Breast epithelium (tissue), 4 donors: ENCODE measurements at regions of chr20 and their contacts with region 1.

Region 1: DNA sequence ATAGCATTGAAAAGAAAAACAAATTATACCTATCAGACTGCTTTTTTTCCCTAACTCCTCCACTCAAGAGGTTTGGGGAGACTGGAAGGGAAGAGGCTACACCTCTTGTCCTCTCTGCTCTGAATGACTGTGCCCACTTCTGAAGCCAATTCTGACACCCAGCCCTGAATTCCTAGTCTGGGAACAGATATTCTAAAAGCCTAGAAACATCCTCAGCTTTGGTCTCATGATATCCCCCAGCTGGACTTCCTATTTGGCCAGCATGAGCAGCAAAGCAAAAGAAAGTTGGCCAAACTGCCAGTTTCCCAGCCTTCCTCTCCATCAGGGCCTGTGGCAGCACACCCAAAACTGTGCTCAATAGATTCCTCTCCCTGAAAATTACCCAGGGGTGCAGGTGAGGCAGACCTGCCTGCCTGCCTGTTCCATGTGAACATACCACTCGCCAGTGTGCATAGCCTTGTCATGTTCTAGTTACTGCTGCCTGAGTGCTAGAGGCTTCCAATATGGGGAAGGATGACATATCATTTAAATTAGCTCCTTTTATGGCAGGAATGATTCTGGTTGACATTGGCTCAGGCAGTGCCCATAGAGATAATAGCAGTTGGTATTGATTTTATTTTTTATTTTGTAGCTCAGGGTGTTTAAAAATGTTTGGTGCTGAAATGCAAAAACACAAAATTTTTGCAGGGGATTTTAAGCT is 152.1 kb upstream of the RIN2 start:
- DNase-seq: no peak
- H3K4me3 ChIP-seq: no peak overlapping the region
- H3K27ac ChIP-seq: no peak overlapping the region
- H3K4me1 ChIP-seq: no peaks in the 10 kb centered on the region
- H3K27me3 ChIP-seq: no peaks in the 10 kb centered on the region
- CTCF ChIP-seq: no peak
- POLR2A ChIP-seq: no peak

Region 2: GRCh38 chr20:18237682-18238081 is 1368.3 kb before region 1 on chr20:
- intact Hi-C with region 1: no loop called
- DNase-seq: no peak
- H3K4me3 ChIP-seq: no peak overlapping the region
- H3K27ac ChIP-seq: no peak overlapping the region
- H3K4me1 ChIP-seq: no peaks in the 10 kb centered on the region
- H3K27me3 ChIP-seq: no peaks in the 10 kb centered on the region
- CTCF ChIP-seq: no peak
- POLR2A ChIP-seq: no peak

Region 3: GRCh38 chr20:19571996-19572395 is 33.9 kb before region 1 on chr20:
- intact Hi-C with region 1: loop called (anchors 1 kb)
- DNase-seq: no peak
- H3K4me3 ChIP-seq: no peak overlapping the region
- H3K27ac ChIP-seq: no peak overlapping the region
- H3K4me1 ChIP-seq: no peaks in the 10 kb centered on the region
- H3K27me3 ChIP-seq: no peaks in the 10 kb centered on the region
- CTCF ChIP-seq: no peak
- POLR2A ChIP-seq: no peak